CD4-positive, alpha-beta T cell (primary cell): ENCODE measurements at regions of chr2 and their contacts with region 1.

Region 1: DNA sequence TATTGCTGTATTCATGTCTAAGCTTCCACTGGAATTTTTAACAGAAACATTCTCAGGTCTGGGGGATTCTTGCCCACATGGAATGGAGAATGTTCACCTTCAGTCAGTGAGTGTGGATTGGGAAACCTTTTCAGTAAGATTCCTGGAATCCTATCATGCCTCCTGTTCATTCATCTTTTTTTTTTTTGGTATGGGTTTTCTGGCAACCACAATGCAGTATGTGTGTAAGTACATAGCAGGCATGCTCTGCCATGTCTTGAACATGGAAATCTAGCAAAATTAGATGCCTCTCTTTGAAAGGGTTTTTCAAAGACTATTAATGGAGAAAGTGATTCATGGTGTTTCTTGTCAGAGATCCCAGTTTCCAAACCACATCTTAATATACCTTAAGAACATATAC is 176.5 kb downstream of the LTBP1 start:
- DNase-seq: no peak
- ATAC-seq: no peak
- H3K4me3 ChIP-seq: no peak overlapping the region
- H3K4me3 Mint-ChIP-seq: no peak overlapping the region
- H3K27ac ChIP-seq: no peak overlapping the region
- H3K27ac Mint-ChIP-seq: no peak overlapping the region
- H3K4me1 ChIP-seq: no peaks in the 10 kb centered on the region
- H3K4me1 Mint-ChIP-seq: no peaks in the 10 kb centered on the region
- H3K27me3 ChIP-seq: no peaks in the 10 kb centered on the region
- H3K27me3 Mint-ChIP-seq: peaks cover 6% of the 10 kb centered on the region
- CTCF ChIP-seq: no peak

Region 2: DNA sequence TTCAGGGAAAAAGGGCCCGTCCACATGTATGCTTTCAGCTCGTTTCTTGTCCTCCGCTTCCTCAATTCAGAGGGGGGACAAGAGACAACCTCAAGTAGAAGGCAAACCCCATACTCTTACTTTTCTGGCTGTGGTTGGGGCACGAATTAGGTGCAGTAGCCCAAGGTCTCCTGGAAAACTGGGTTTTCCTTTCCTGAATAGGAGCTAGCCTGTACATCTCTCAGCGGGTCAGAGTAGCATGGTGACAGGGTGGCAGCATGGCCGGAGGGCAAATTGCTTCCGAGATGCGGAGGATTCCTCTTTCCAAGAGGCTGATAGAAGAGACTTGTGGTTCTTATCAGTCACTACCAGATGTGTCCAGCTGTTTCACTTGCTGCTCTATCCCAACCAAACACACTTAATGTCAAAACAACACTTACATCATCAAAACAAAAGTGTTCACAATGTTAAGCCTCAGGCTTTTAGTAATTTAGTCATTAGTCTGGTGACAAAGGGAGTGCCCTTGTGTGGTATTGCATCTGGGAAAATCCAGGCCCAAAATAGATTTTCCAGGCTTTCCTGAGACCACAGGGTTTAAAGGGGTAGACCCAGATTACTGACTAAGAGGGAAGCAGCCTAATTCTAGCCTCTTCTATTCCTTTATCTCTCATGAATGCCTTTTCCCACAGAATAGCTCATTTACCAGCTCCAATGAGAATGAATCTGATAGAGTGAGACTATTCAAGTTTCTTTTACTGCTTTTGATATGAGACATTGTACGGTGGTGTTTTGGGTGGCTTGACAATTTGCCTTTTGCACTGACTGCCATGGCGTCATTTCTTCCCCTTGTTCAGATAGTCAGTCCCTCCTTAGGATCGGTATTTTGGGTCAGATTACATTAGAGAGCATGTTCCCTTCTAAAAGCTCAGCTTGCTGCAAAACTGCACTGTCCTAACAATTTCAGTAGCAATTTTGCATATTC is 14.5 kb before region 1 on chr2:
- CTCF ChIA-PET with region 1: no interaction called
- POLR2A ChIA-PET with region 1: no interaction called
- intact Hi-C with region 1: no loop called
- DNase-seq: no peak
- ATAC-seq: no peak
- H3K4me3 ChIP-seq: no peak overlapping the region
- H3K4me3 Mint-ChIP-seq: no peak overlapping the region
- H3K27ac ChIP-seq: no peak overlapping the region
- H3K27ac Mint-ChIP-seq: no peak overlapping the region
- H3K4me1 ChIP-seq: no peaks in the 10 kb centered on the region
- H3K4me1 Mint-ChIP-seq: no peaks in the 10 kb centered on the region
- H3K27me3 ChIP-seq: peaks cover 0 to 15% of the 10 kb centered on the region in 2 experiments
- H3K27me3 Mint-ChIP-seq: peaks cover 54% of the 10 kb centered on the region
- CTCF ChIP-seq: no peak

Region 3: DNA sequence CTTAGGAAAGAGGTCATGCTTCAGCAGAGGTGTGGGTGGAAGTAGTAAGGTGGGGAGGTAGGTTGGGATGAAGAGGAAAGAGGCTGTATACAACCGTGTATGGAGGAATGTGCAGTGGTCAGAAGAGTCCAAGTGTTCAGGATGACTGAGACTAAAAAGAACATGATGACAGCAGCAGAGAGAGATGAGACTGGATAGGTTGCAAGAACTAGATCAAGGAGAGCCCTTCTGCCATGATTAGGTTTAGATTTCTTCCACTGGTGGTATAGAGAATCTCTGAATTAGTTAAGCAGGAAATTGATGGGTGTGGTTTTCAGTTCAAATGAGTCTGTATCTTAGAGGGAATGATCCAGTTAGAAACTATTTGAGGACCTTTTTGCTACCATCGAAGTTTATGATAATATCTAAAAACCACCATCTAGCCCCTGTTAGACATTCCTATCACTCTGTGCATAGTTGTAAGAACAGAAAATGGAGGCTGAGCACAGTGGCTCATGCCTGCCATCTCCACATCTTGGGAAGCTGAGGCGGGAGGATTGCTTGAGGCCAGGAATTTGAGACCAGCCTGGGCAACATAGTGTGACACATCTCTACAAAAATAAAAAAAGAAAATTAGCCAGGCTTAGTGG is 44.5 kb after region 1 on chr2:
- CTCF ChIA-PET with region 1: no interaction called
- POLR2A ChIA-PET with region 1: no interaction called
- intact Hi-C with region 1: no loop called
- DNase-seq: no peak
- ATAC-seq: no peak
- H3K4me3 ChIP-seq: no peak overlapping the region
- H3K4me3 Mint-ChIP-seq: no peak overlapping the region
- H3K27ac ChIP-seq: no peak overlapping the region
- H3K27ac Mint-ChIP-seq: no peak overlapping the region
- H3K4me1 ChIP-seq: no peaks in the 10 kb centered on the region
- H3K4me1 Mint-ChIP-seq: no peaks in the 10 kb centered on the region
- H3K27me3 ChIP-seq: peaks cover 0 to 5% of the 10 kb centered on the region in 2 experiments
- H3K27me3 Mint-ChIP-seq: peaks cover 6% of the 10 kb centered on the region
- CTCF ChIP-seq: no peak

Region 4: DNA sequence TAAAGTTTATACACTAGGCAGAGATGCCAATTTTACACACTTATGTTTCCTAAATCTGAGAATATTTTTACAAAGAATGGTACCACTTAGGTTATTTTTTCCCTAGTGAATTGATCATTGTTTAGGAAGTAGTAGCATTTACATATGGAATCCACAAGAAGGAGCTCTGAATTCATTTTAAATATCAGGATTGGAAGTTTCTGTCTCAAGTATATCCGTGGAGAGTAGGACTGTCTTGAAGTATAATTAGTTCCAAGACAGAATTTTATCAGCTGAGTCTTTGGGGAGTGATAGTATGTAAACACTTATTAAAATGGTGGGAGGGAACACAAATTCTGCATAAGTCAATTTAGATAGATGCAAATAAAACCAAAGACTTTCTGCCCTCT is 558.1 kb after region 1 on chr2:
- CTCF ChIA-PET with region 1: no interaction called
- POLR2A ChIA-PET with region 1: no interaction called
- intact Hi-C with region 1: loop called in 1 of 2 experiments (anchors 5 kb)
- DNase-seq: no peak
- ATAC-seq: no peak
- H3K4me3 ChIP-seq: no peak overlapping the region
- H3K4me3 Mint-ChIP-seq: no peak overlapping the region
- H3K27ac ChIP-seq: no peak overlapping the region
- H3K27ac Mint-ChIP-seq: no peak overlapping the region
- H3K4me1 ChIP-seq: no peaks in the 10 kb centered on the region
- H3K4me1 Mint-ChIP-seq: no peaks in the 10 kb centered on the region
- H3K27me3 ChIP-seq: no peaks in the 10 kb centered on the region
- H3K27me3 Mint-ChIP-seq: peaks cover 26% of the 10 kb centered on the region
- CTCF ChIP-seq: no peak